Gastrocnemius medialis (tissue), 4 donors: ENCODE measurements at regions of chr3 and their contacts with region 1.

Region 1: DNA sequence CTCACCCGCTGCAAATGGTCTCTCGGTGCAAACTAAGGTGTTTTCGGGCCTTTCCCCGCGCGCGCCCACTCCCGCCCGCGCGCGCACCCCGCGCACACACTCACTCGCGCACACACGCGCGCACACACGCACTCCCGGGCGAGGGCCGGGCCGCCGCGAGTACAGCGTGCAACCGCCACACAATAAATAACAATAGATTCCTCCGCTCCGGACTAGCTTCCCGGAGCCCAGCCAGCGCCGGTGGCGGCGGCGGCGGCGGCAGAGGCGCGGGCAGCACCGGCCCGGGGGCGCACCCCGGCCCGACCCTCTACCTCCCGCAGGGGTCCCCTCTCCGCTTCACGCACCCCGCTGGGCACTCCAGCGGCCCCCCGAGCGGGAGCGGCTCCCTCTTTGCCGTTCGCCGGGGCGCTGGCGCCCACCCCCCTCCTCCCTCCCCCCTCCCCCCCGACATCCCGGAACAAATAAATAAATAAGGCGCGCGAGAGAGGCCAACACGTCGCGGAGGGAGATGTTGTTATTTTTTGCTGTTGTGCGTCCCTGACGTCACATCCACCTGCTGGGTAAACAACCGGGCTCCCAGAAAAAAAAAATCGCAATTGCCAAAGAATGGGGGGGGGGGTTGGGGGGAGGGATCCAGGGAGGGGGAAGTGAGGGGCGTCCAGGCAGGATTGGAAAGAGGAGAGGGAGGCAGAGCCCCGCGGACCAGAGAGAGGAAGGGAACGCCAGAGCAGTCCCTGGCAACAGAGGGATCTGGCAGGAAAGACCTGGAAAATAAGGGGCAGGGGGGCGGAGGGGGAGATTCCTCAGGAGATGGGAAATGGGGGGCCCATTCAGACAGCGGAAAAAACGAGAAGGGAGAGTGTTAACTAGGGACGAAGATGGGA is at the start of gene FOXP1:
- DNase-seq: peak; percentile 57 to 69
- ATAC-seq: peak; percentile 72 to 75
- H3K4me3 ChIP-seq: peak within 1 kb of the TSS; percentile 75 to 90 (median 83)
- H3K27ac ChIP-seq: peak within 1 kb of the TSS; percentile 92 to 94 (median 93)
- H3K4me1 ChIP-seq: peaks cover 23 to 25% of the 10 kb centered on the region in 2 donors
- H3K27me3 ChIP-seq: no peaks in the 10 kb centered on the region
- CTCF ChIP-seq: peak in 1 of 5 experiments; percentile 6
- POLR2A ChIP-seq: peak; percentile 40 to 74
- total RNA-seq, gene FOXP1: 13.2 to 46.6 (median 29.2) TPM

Region 2: GRCh38 chr3:70550723-70551319 is 1033.0 kb before region 1 on chr3:
- in situ Hi-C with region 1: loop called in 1 of 4 experiments (anchors 25 kb)
- intact Hi-C with region 1: loop called (anchors 5 kb)
- DNase-seq: peak; percentile 15 to 35
- ATAC-seq: peak in 1 of 2 donors; percentile 75
- H3K4me3 ChIP-seq: no peak overlapping the region
- H3K27ac ChIP-seq: no peak overlapping the region
- H3K4me1 ChIP-seq: no peaks in the 10 kb centered on the region
- H3K27me3 ChIP-seq: no peaks in the 10 kb centered on the region
- CTCF ChIP-seq: peak; percentile 40 to 71 (median 58)
- POLR2A ChIP-seq: no peak

Region 3: GRCh38 chr3:70982700-70983140 is 601.1 kb before region 1 on chr3:
- in situ Hi-C with region 1: loop called in 1 of 4 experiments (anchors 25 kb)
- intact Hi-C with region 1: no loop called
- DNase-seq: peak; percentile 17 to 46
- ATAC-seq: peak; percentile 80 to 83
- H3K4me3 ChIP-seq: peak overlapping the region; percentile 3 to 18 (median 8)
- H3K27ac ChIP-seq: peak overlapping the region; percentile 78 to 81 (median 80)
- H3K4me1 ChIP-seq: peaks cover 30 to 38% of the 10 kb centered on the region in 2 donors
- H3K27me3 ChIP-seq: no peaks in the 10 kb centered on the region
- CTCF ChIP-seq: no peak
- POLR2A ChIP-seq: no peak

Region 4: DNA sequence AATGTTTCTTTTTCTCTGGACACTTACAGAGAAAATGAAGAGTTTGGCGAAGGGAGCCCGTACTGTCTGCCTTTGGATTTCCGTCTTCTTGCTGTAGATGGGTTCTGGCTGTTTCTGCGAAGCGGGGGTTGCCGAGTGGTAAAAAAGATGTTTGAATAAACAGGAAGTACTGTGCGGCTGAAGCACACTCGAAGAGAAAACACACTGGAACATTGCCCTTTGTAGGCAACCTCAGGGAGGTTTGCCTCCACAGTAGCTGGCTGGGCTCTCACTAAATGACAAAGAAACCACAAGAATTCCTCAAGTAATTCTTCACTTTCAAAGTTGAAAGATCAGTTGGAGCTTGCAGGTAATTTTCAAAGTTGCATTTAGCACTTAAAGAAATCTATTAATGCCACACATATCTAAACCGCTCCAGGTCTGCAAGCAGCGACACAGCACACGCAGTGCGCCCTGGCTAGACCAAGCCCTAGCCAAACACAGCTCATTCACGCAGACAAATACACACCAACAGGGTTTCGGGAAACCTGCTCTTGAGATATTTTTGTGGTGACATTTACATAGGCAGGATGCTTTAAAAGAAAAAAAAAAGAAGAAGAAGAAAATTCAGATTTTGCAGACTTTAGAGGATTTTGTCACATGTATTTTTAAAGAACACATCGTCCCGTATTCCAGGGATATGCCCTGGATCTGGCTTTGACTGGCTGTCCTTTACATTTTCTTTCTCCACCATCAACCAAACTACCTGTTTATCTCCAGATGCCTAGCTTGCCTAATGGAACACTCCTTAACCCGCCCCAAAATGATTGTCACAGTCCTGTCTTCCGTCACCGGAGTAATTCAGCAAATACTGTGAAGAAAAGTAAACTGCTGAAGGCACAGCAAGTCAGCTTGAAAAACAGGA is 453.1 kb before region 1 on chr3:
- in situ Hi-C with region 1: loop called in 1 of 4 experiments (anchors 25 kb)
- intact Hi-C with region 1: no loop called
- DNase-seq: peak; percentile 48 to 49
- ATAC-seq: peak; percentile 77 to 83
- H3K4me3 ChIP-seq: peak overlapping the region; percentile 49 to 69 (median 58)
- H3K27ac ChIP-seq: peak overlapping the region; percentile 61 to 78 (median 71)
- H3K4me1 ChIP-seq: peaks cover 52 to 55% of the 10 kb centered on the region in 2 donors
- H3K27me3 ChIP-seq: no peaks in the 10 kb centered on the region
- CTCF ChIP-seq: no peak
- POLR2A ChIP-seq: peak; percentile 15 to 34

Region 5: GRCh38 chr3:71369701-71370391 is 214.0 kb before region 1 on chr3:
- in situ Hi-C with region 1: no loop called
- intact Hi-C with region 1: loop called (anchors 10 kb)
- DNase-seq: no peak
- ATAC-seq: peak; percentile 80 to 89
- H3K4me3 ChIP-seq: no peak overlapping the region
- H3K27ac ChIP-seq: peak overlapping the region in 3 of 4 donors; percentile 1 to 33 (median 28)
- H3K4me1 ChIP-seq: peaks cover 10 to 18% of the 10 kb centered on the region in 2 donors
- H3K27me3 ChIP-seq: no peaks in the 10 kb centered on the region
- CTCF ChIP-seq: no peak
- POLR2A ChIP-seq: no peak

Region 6: GRCh38 chr3:71487418-71487817 is 96.4 kb before region 1 on chr3:
- in situ Hi-C with region 1: no loop called
- intact Hi-C with region 1: no loop called
- DNase-seq: no peak
- ATAC-seq: no peak
- H3K4me3 ChIP-seq: no peak overlapping the region
- H3K27ac ChIP-seq: no peak overlapping the region
- H3K4me1 ChIP-seq: no peaks in the 10 kb centered on the region
- H3K27me3 ChIP-seq: no peaks in the 10 kb centered on the region
- CTCF ChIP-seq: no peak
- POLR2A ChIP-seq: no peak

Region 7: DNA sequence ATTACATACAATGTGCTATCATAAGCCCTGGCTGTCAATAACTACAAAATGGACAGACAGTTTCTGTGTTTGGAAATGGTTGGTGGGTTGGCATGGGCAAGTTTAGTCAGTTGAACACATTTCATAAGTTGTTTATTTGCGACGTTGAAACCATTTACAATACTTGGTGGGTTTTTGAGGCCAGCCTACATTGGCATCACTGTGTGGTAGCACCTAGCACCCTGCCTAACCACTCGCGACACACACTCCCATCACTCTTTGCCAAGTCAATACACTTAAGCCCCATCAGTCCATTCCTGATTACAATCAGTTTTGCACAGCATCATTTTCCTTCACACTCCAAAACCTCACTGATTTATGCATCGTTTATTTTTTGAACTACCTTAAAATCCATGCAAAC is 187.3 kb after region 1 on chr3:
- in situ Hi-C with region 1: no loop called
- intact Hi-C with region 1: no loop called
- DNase-seq: no peak
- ATAC-seq: no peak
- H3K4me3 ChIP-seq: no peak overlapping the region
- H3K27ac ChIP-seq: no peak overlapping the region
- H3K4me1 ChIP-seq: no peaks in the 10 kb centered on the region
- H3K27me3 ChIP-seq: peaks cover 0 to 4% (median 0%) of the 10 kb centered on the region in 3 donors
- CTCF ChIP-seq: no peak
- POLR2A ChIP-seq: no peak